ENCODE measurements at regions of chr5 and their contacts with region 1.

Region 1: GRCh38 chr5:62460578-62460983 is 48.0 kb downstream of the IPO11 start:
- DNase-seq: no peak
- H3K4me3 Mint-ChIP-seq: no peak overlapping the region
- H3K27ac Mint-ChIP-seq: no peak overlapping the region
- H3K4me1 Mint-ChIP-seq: peaks cover 4% of the 10 kb centered on the region
- H3K27me3 Mint-ChIP-seq: no peaks in the 10 kb centered on the region

Region 2: DNA sequence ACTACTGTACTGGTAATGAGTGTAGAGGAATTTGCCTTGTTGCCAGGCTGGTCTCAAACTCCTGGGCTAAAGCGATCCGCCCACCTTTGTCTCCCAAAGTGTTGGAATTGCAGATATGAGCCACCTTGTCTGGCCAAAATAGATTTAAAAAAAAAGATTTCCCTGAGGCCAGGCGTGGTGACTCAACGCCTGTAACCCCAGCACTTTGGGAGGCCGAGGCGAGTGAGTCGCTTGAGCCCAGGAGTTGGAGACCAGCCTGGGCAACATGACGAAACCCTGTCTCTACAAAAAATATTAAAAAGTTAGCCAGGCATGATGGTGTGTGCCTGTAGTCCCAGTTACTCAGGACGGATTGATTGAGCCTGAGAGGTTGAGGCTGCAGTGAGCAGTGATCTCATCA is 14.5 kb after region 1 on chr5:
- CTCF ChIA-PET with region 1: interaction called, 13 read pairs
- POLR2A ChIA-PET with region 1: no interaction called
- DNase-seq: no peak
- H3K4me3 Mint-ChIP-seq: no peak overlapping the region
- H3K27ac Mint-ChIP-seq: no peak overlapping the region
- H3K4me1 Mint-ChIP-seq: peaks cover 8% of the 10 kb centered on the region
- H3K27me3 Mint-ChIP-seq: no peaks in the 10 kb centered on the region

Region 3: GRCh38 chr5:62692946-62693713 is 232.5 kb after region 1 on chr5:
- CTCF ChIA-PET with region 1: no interaction called
- POLR2A ChIA-PET with region 1: no interaction called
- DNase-seq: no peak
- H3K4me3 Mint-ChIP-seq: no peak overlapping the region
- H3K27ac Mint-ChIP-seq: no peak overlapping the region
- H3K4me1 Mint-ChIP-seq: peaks cover 12% of the 10 kb centered on the region
- H3K27me3 Mint-ChIP-seq: no peaks in the 10 kb centered on the region

Region 4: GRCh38 chr5:62779010-62779422 is 318.4 kb after region 1 on chr5:
- CTCF ChIA-PET with region 1: interaction called, 25 read pairs
- POLR2A ChIA-PET with region 1: no interaction called
- DNase-seq: no peak
- H3K4me3 Mint-ChIP-seq: no peak overlapping the region
- H3K27ac Mint-ChIP-seq: no peak overlapping the region
- H3K4me1 Mint-ChIP-seq: peaks cover 3% of the 10 kb centered on the region
- H3K27me3 Mint-ChIP-seq: peaks cover 5% of the 10 kb centered on the region